IMR-90 (cell line): ENCODE measurements at regions of chrX and their contacts with region 1.

Region 1: DNA sequence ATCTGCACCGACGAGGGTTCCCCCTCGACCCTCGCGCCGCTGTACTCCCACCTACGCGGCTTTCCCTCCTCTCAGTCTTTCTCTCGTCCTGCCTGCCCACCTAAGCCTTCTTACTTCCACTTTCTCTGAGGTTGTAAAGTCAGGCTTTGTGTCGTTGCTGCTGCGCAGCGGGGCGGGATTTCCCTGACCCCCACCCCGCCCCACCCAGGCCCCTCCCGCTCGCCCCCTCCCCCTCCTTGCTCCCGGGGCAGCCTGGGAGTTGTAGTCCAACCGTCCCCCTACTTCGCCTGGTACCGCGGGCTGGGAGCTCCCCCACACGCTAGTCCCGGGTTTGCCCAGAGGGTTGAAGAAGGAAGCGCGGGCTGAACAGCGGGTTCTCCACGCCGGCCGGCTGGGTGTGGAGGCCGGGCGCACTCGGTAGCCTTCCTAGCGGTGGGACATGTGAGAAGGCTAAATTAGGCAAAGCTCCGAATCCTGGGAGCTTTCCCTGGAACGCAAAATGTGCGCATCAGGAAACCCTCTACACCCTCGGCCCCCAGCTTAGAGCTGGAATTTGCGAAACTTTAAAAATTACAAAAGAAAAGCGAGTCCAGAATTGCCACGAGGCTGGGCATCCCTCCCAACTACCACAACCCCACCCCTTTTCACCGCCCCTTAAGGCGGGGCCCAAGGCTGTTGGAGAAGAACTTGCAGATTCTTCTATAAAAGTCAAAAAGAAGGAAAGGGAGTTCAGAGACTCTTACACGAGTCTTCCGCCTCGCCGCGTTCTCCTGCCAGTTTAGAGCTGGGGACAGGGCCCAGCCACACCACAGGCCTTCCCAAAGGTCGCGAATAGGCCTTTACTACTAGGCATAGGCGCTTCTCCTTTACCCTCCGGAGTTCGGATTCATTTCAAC is at the start of gene ATP11C:
- DNase-seq: peak; percentile 83
- ATAC-seq: peak; percentile 86
- H3K4me3 ChIP-seq: peak within 1 kb of the TSS; percentile 80
- H3K27ac ChIP-seq: peak within 1 kb of the TSS; percentile 91
- H3K4me1 ChIP-seq: no peaks in the 10 kb centered on the region
- H3K27me3 ChIP-seq: no peaks in the 10 kb centered on the region
- CTCF ChIP-seq: peak; percentile 34; the same call in 1 of the 2 replicates
- POLR2A ChIP-seq: no peak; the same call in 1 of the 2 replicates
- RAD21 ChIP-seq: no peak
- total RNA-seq, gene ATP11C: 40.0 and 71.4 TPM in 2 replicates

Region 2: DNA sequence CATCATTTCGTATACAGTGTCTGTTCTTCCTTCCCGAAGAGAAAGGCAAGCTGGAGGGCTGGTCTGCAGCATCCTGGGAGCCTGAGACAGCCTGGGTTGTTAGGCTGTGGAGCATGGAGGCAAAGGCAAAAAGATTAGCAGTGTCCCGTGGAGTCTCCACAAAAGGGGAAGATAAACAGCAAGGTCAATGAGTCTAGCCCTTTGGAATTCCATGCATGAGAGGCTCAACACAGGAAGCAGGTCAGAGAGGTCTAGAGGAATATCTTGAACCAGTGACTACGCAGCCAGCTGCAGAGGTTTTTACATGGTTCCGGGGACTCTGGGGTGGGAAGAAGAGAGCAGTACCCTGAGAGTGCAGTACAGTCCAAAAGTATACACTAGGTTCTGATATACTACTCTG is 213.0 kb before region 1 on chrX:
- CTCF ChIA-PET with region 1: no interaction called
- POLR2A ChIA-PET with region 1: no interaction called
- dilution Hi-C with region 1: no loop called
- in situ Hi-C with region 1: no loop called
- intact Hi-C with region 1: loop called (anchors 10 kb)
- DNase-seq: peak; percentile 68
- ATAC-seq: peak; percentile 96
- H3K4me3 ChIP-seq: no peak overlapping the region
- H3K27ac ChIP-seq: peak overlapping the region; percentile 28; the same call in 1 of the 2 replicates
- H3K4me1 ChIP-seq: no peaks in the 10 kb centered on the region
- H3K27me3 ChIP-seq: no peaks in the 10 kb centered on the region
- CTCF ChIP-seq: no peak
- POLR2A ChIP-seq: no peak
- RAD21 ChIP-seq: no peak

Region 3: GRCh38 chrX:139759637-139760036 is 173.5 kb before region 1 on chrX:
- CTCF ChIA-PET with region 1: no interaction called
- POLR2A ChIA-PET with region 1: no interaction called
- dilution Hi-C with region 1: no loop called
- in situ Hi-C with region 1: no loop called
- intact Hi-C with region 1: loop called (anchors 5 kb)
- DNase-seq: peak; percentile 42
- ATAC-seq: peak; percentile 65; the same call in 1 of the 2 replicates
- H3K4me3 ChIP-seq: no peak overlapping the region
- H3K27ac ChIP-seq: no peak overlapping the region
- H3K4me1 ChIP-seq: no peaks in the 10 kb centered on the region
- H3K27me3 ChIP-seq: no peaks in the 10 kb centered on the region
- CTCF ChIP-seq: peak; percentile 57
- POLR2A ChIP-seq: no peak
- RAD21 ChIP-seq: peak; percentile 50; the same call in 1 of the 2 replicates

Region 4: DNA sequence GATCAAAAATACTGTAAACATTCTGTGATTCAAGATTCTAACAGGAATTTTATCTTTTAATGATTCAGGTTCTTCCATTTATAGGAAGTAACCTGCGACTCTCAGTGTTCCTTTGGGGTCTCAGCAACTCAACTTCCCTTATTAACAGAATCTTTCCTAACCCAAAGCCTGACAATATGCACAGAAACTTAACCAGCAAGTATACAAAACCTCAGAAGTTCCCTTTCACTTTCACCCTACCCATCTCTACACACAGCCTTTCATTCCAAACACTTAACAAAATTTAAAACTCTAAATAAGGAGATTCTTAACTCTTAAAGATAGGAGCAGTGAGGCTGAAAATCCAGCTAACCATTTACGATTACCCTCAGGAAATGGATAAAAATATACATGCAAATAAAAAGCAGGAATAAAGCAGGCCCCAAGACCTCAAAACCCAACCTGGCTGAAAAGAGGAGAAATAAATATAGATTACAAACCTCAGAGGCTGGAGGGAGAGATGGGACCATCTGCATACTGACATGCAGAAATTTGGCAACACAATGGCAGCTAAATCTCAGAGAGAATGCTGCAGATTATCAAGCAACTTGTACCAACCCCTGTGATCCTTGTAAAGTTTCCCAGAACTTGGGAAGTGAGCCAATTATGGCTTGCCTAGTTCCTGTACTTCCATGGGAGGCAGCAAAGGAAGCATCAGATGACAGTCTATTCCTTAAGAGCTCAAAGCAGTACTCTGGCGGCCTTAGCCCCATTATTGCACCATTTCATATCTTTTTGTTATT is 101.3 kb before region 1 on chrX:
- CTCF ChIA-PET with region 1: no interaction called
- POLR2A ChIA-PET with region 1: no interaction called
- dilution Hi-C with region 1: no loop called
- in situ Hi-C with region 1: no loop called
- intact Hi-C with region 1: loop called (anchors 5 kb)
- DNase-seq: peak; percentile 70
- ATAC-seq: peak; percentile 78
- H3K4me3 ChIP-seq: no peak overlapping the region
- H3K27ac ChIP-seq: no peak overlapping the region
- H3K4me1 ChIP-seq: peaks cover 7% of the 10 kb centered on the region
- H3K27me3 ChIP-seq: no peaks in the 10 kb centered on the region
- CTCF ChIP-seq: no peak
- POLR2A ChIP-seq: no peak
- RAD21 ChIP-seq: no peak

Region 5: GRCh38 chrX:139945075-139945474 is 11.9 kb after region 1 on chrX:
- CTCF ChIA-PET with region 1: no interaction called
- POLR2A ChIA-PET with region 1: no interaction called
- dilution Hi-C with region 1: no loop called
- in situ Hi-C with region 1: no loop called
- intact Hi-C with region 1: no loop called
- DNase-seq: no peak
- ATAC-seq: no peak
- H3K4me3 ChIP-seq: no peak overlapping the region
- H3K27ac ChIP-seq: no peak overlapping the region
- H3K4me1 ChIP-seq: no peaks in the 10 kb centered on the region
- H3K27me3 ChIP-seq: no peaks in the 10 kb centered on the region
- CTCF ChIP-seq: no peak
- POLR2A ChIP-seq: no peak
- RAD21 ChIP-seq: no peak

Region 6: DNA sequence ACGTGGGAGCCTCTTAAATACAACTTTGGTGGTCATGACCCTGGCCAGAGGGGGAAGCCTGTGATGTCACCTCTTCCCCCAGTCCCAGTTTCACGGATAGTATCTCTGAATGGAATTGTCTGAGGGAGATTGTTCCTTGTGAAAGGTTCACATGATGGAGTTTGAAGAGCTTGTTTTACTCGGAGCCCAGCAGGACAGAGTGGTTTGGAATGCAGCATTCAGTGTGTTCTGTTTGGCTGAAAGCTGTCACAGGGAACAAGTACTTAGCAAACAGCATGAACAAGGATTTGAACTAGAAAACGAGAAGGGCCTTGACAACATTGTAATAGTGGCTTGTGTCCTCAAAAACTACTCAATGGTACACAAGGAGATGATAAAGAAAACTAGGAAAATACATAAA is 166.1 kb after region 1 on chrX:
- CTCF ChIA-PET with region 1: no interaction called
- POLR2A ChIA-PET with region 1: no interaction called
- dilution Hi-C with region 1: no loop called
- in situ Hi-C with region 1: no loop called
- intact Hi-C with region 1: no loop called
- DNase-seq: no peak
- ATAC-seq: no peak
- H3K4me3 ChIP-seq: no peak overlapping the region
- H3K27ac ChIP-seq: no peak overlapping the region
- H3K4me1 ChIP-seq: no peaks in the 10 kb centered on the region
- H3K27me3 ChIP-seq: no peaks in the 10 kb centered on the region
- CTCF ChIP-seq: no peak
- POLR2A ChIP-seq: no peak
- RAD21 ChIP-seq: no peak

Region 7: GRCh38 chrX:140480765-140481164 is 547.6 kb after region 1 on chrX:
- CTCF ChIA-PET with region 1: no interaction called
- POLR2A ChIA-PET with region 1: no interaction called
- dilution Hi-C with region 1: no loop called
- in situ Hi-C with region 1: no loop called
- intact Hi-C with region 1: no loop called
- DNase-seq: no peak
- ATAC-seq: no peak
- H3K4me3 ChIP-seq: no peak overlapping the region
- H3K27ac ChIP-seq: no peak overlapping the region
- H3K4me1 ChIP-seq: no peaks in the 10 kb centered on the region
- H3K27me3 ChIP-seq: no peaks in the 10 kb centered on the region
- CTCF ChIP-seq: no peak
- POLR2A ChIP-seq: no peak
- RAD21 ChIP-seq: no peak